CD4-positive, alpha-beta T cell (primary cell): ENCODE measurements at regions of chr17 and their contacts with region 1.

Region 1: DNA sequence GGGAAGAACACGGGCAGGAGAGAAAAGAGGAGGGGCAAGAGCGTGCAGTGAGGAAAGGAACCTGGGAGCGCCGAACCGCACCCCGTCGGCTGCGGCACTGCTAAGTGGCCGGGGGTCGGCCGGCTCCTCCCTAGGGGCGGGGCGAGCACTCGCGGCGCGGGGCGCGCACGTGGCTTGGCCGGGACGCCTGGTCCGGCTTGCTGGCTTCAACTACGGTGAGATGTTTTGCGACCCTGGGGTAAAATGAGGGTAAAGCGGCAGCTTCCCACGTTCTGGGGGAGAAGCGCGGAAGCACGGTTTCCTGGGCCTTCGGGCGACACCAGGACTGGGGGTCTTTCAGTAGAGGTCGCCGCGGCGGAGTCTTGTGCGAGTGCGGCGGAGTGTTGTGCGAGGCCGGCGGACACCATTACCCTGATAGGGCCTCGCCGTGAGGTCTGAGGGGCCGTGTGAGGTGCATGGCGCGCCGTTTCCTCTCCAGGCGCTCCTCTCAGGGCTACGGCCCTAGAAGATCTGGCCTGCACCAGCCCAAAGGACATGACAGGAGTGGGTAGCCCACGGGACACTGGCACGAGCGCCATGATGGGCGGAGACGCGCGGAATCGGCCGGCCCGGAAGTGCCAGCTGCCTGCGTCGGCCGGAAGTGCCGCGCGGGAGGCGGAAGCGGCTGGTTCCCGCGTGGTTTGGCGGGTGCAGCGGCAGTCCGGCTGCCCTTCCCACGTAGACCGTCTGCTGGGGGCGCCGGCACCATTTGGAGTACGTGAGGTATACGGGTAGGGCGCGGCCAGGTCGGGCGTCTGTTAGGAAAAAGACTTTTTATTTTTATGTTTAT is at the starts of genes MYO19 and PIGW:
- DNase-seq: peak; percentile 70 to 94 (median 80)
- ATAC-seq: peak; percentile 73
- H3K4me3 ChIP-seq: peak within 1 kb of the TSS; percentile 95
- H3K4me3 Mint-ChIP-seq: peak within 1 kb of the TSS; percentile 93
- H3K27ac ChIP-seq: peak within 1 kb of the TSS; percentile 95 to 97
- H3K27ac Mint-ChIP-seq: peak within 1 kb of the TSS; percentile 95
- H3K4me1 ChIP-seq: peaks cover 19% of the 10 kb centered on the region
- H3K4me1 Mint-ChIP-seq: peaks cover 25% of the 10 kb centered on the region
- H3K27me3 ChIP-seq: no peaks in the 10 kb centered on the region
- H3K27me3 Mint-ChIP-seq: no peaks in the 10 kb centered on the region
- CTCF ChIP-seq: no peak
- total RNA-seq, gene MYO19: 64.4 to 70.5 TPM
- total RNA-seq, gene PIGW: 3.3 to 3.4 TPM

Region 2: DNA sequence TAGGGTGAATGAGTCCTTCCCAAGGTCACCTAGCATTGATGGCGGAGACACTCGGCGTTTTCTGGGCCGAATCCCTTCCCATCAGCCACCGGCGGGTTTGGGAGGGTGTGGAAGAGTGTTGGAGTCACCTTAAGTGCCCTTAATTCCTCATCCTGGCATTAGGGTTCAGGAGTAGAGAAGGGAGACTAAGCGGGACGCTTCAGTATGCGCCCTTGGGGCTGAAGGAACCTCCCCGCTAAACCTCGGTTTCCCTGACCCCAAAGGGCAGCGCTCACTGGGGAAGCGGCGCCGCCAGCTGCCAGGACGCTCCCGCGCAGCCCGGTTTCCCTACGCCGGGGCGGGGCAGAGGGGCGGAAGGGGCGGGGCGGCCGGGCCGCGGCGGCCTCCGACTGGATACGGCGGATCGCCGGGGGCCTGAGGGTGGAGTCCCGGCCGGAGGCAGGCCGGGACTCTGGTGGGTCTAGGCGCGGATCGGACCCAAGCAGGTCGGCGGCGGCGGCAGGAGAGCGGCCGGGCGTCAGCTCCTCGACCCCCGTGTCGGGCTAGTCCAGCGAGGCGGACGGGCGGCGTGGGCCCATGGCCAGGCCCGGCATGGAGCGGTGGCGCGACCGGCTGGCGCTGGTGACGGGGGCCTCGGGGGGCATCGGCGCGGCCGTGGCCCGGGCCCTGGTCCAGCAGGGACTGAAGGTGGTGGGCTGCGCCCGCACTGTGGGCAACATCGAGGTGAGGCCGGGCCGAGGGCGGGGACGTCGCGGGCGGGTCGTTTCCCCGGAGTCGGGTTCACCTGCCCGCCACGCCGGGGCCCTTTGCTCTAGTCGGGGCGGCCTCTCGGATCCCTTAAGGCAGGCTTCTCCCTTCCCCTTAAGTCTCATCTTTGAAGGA is 56.6 kb after region 1 on chr17 and contains the start of gene DHRS11:
- CTCF ChIA-PET with region 1: no interaction called
- POLR2A ChIA-PET with region 1: interaction called, 3 read pairs
- intact Hi-C with region 1: loop called in 1 of 2 experiments (anchors 5 kb)
- DNase-seq: peak; percentile 48 to 83 (median 72)
- ATAC-seq: peak; percentile 88
- H3K4me3 ChIP-seq: peak within 1 kb of the TSS; percentile 61
- H3K4me3 Mint-ChIP-seq: peak within 1 kb of the TSS; percentile 87
- H3K27ac ChIP-seq: peak within 1 kb of the TSS in 1 of 2 donors; percentile 30
- H3K27ac Mint-ChIP-seq: peak within 1 kb of the TSS; percentile 67
- H3K4me1 ChIP-seq: peaks cover 18% of the 10 kb centered on the region
- H3K4me1 Mint-ChIP-seq: peaks cover 28% of the 10 kb centered on the region
- H3K27me3 ChIP-seq: no peaks in the 10 kb centered on the region
- H3K27me3 Mint-ChIP-seq: no peaks in the 10 kb centered on the region
- CTCF ChIP-seq: no peak
- total RNA-seq, gene DHRS11: 2.9 to 4.0 TPM

Region 3: GRCh38 chr17:36601303-36602029 is 66.4 kb after region 1 on chr17 and contains the start of gene MRM1:
- CTCF ChIA-PET with region 1: interaction called, 4 read pairs
- POLR2A ChIA-PET with region 1: interaction called, 17 read pairs
- intact Hi-C with region 1: no loop called
- DNase-seq: peak; percentile 80 to 94 (median 87)
- ATAC-seq: peak; percentile 74
- H3K4me3 ChIP-seq: peak within 1 kb of the TSS; percentile 89
- H3K4me3 Mint-ChIP-seq: peak within 1 kb of the TSS; percentile 97
- H3K27ac ChIP-seq: peak within 1 kb of the TSS; percentile 57 to 65
- H3K27ac Mint-ChIP-seq: peak within 1 kb of the TSS; percentile 94
- H3K4me1 ChIP-seq: peaks cover 31% of the 10 kb centered on the region
- H3K4me1 Mint-ChIP-seq: peaks cover 47% of the 10 kb centered on the region
- H3K27me3 ChIP-seq: no peaks in the 10 kb centered on the region
- H3K27me3 Mint-ChIP-seq: no peaks in the 10 kb centered on the region
- CTCF ChIP-seq: no peak
- total RNA-seq, gene MRM1: 0.81 to 1.1 TPM